GM12878 (cell line): ENCODE measurements at regions of chr9 and their contacts with region 1.

Region 1: DNA sequence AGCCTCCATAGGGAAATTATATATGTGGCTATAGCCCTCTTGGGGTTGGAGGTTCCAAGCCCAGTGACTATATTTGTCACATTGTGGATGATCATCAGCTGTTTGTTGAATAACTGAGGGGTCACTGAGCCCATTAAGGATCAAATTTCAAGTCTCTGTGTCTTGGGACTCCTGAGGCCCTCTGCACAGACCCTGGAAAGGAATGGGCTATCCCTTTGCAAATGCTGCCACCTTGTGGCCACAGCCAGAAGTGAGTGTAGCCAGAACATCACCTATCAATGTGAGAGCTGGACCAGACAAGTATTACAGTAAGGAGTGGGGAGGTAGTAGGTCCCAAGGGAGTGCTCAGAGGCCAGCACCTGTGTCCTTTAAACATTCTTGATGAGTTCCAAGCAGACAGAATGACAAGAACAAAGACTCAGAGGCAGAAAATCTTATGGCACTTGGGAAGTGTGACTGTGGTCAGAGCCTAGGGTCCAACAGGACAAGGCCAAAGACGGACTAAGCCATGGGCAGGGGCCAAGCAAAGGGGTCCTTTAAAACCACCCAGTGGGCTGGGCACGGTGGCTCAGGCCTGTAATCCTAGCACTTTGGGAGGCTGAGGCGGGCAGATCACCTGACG is 8.2 kb downstream of the RPP25L start:
- DNase-seq: peak; percentile 27
- ATAC-seq: peak; percentile 98
- H3K4me3 ChIP-seq: no peak overlapping the region
- H3K27ac ChIP-seq: no peak overlapping the region
- H3K4me1 ChIP-seq: no peaks in the 10 kb centered on the region
- H3K27me3 ChIP-seq: peaks cover 4% of the 10 kb centered on the region in 2 experiments; a peak in 2 of 4 replicates
- CTCF ChIP-seq: peak; percentile 90 to 95 (median 93)
- EP300 ChIP-seq: no peak
- POLR2A ChIP-seq: no peak
- RAD21 ChIP-seq: peak; percentile 82

Region 2: DNA sequence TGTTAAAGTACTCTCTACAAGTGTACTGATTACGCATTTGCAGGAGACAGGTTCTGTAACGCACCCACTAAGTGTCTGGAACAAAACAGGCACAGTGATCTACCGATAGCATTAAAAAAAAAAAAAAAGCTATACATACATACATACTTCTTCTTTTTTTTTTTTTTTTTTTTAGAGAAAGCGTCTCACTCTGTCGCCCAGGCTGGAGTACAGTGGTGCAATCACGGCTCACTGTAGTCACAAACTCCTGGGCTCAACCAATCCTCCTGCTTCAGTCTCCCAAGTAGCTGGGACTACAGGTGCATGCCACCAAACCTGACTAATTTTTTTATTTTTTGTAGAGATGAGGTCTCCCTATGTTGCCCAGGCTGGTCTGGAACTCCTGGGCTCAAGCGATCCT is 282.3 kb before region 1 on chr9:
- CTCF ChIA-PET with region 1: no interaction called
- POLR2A ChIA-PET with region 1: no interaction called
- RAD21 ChIA-PET with region 1: no interaction called
- SMC1A ChIA-PET with region 1: no interaction called
- in situ Hi-C with region 1: no loop called
- intact Hi-C with region 1: no loop called
- DNase-seq: no peak
- ATAC-seq: peak; percentile 36; the same call in 2 of the 3 replicates
- H3K4me3 ChIP-seq: no peak overlapping the region
- H3K27ac ChIP-seq: no peak overlapping the region
- H3K4me1 ChIP-seq: no peaks in the 10 kb centered on the region; the same call in 1 of the 2 replicates
- H3K27me3 ChIP-seq: no peaks in the 10 kb centered on the region
- CTCF ChIP-seq: no peak
- EP300 ChIP-seq: no peak
- POLR2A ChIP-seq: no peak
- RAD21 ChIP-seq: no peak

Region 3: DNA sequence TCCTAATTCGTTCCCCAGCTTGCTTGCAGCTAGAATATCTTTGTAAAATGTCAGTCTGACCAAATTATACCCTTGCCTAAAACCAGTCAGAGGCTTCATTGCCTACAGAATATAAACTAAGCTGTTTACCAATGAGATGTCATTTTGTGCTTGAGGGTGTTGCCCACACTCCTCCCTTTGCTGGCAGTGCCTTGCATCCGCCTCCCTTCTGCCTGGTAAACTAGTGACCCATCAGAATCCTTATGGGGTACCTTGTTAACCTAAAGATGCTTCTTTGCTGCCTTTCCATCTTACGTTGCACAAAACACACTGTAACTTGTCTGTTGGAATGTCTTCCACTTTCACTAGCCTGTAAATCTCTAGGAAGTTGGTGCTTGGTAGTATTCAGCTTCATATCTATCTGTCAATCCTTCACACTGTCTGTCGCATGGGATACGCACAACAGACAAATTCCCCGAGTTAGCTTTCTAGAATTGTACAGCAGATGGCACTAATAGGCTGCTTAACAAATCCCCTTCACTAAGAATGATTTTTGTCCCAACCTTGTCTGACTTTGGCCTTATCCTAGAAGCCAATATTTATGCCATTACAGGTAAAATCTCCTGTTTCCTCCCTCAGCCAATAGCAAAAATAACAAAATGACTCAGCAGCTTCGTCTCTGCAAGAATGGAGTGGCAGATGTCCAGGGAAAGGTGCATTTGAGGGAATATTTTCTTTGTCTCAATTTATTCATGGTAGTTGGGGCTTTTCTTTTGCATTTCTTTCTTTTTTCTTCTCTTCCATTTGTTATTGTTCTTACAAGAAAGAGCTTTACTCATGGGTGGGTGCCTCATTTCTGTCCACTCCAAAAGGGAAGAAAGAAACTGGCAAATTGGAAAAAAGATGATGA is 271.4 kb before region 1 on chr9:
- CTCF ChIA-PET with region 1: interaction called, 4 read pairs
- POLR2A ChIA-PET with region 1: no interaction called
- RAD21 ChIA-PET with region 1: no interaction called
- SMC1A ChIA-PET with region 1: no interaction called
- in situ Hi-C with region 1: no loop called
- intact Hi-C with region 1: loop called (anchors 5 kb)
- DNase-seq: peak; percentile 12
- ATAC-seq: no peak
- H3K4me3 ChIP-seq: no peak overlapping the region
- H3K27ac ChIP-seq: no peak overlapping the region
- H3K4me1 ChIP-seq: no peaks in the 10 kb centered on the region; the same call in 1 of the 2 replicates
- H3K27me3 ChIP-seq: no peaks in the 10 kb centered on the region
- CTCF ChIP-seq: peak; percentile 40 to 61 (median 42); a peak in 4 of 6 replicates
- EP300 ChIP-seq: no peak
- POLR2A ChIP-seq: no peak
- RAD21 ChIP-seq: peak; percentile 55

Region 4: GRCh38 chr9:34403554-34404380 is 200.0 kb before region 1 on chr9:
- CTCF ChIA-PET with region 1: interaction called, 24 read pairs
- POLR2A ChIA-PET with region 1: no interaction called
- RAD21 ChIA-PET with region 1: interaction called, 7 read pairs
- SMC1A ChIA-PET with region 1: interaction called, 3 read pairs
- in situ Hi-C with region 1: no loop called
- intact Hi-C with region 1: no loop called
- DNase-seq: no peak
- ATAC-seq: peak; percentile 62; the same call in 2 of the 3 replicates
- H3K4me3 ChIP-seq: no peak overlapping the region
- H3K27ac ChIP-seq: no peak overlapping the region
- H3K4me1 ChIP-seq: no peaks in the 10 kb centered on the region
- H3K27me3 ChIP-seq: peaks cover 2 to 3% of the 10 kb centered on the region in 2 experiments; a peak in 3 of 4 replicates
- CTCF ChIP-seq: peak; percentile 90 to 99 (median 96)
- EP300 ChIP-seq: no peak
- POLR2A ChIP-seq: no peak
- RAD21 ChIP-seq: peak; percentile 79

Region 5: DNA sequence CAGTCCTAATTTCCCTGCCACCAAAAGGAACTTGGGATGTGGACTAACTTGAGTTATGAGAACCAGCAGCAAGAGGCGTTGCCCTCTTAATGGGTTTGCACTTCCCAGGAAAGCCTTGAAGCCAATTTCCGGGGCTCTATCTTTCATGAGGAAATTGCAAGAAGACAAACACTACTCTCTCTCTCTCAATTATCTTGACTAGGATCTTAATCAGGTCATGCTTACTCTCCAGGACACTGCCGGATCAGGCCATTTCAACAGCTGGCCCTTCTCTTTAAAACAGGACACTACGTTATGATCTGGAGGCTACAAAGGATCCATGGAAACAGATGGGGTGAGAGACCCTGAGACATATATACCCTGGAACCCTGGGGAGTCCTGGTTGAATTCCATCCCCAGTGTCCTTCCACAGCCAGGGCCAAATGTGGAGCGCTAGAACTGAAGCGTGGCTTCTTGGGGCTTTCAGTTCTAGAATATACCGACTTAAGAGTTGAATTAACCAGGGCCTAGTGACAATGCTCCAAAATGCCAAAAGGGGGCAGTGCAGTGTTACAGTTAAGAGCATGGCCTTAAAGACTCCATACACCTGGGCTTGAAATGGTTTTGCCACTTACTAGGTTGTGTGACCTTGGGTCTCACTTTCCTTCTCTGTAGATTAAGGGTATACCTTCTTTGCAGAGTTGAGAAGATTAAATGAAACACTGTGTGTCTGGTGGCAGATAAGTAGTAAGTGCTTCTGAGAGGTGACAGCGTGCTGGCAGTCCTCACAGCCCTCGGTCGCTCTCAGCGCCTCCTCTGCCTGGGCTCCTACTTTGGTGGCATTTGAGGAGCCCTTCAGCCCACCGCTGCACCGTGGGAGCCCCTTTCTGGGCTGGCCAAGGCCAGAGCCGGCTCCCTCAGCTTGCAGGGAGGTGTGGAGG is 166.5 kb before region 1 on chr9:
- CTCF ChIA-PET with region 1: interaction called, 16 read pairs
- POLR2A ChIA-PET with region 1: no interaction called
- RAD21 ChIA-PET with region 1: interaction called, 3 read pairs
- SMC1A ChIA-PET with region 1: interaction called, 3 read pairs
- in situ Hi-C with region 1: no loop called
- intact Hi-C with region 1: no loop called
- DNase-seq: peak; percentile 40
- ATAC-seq: peak; percentile 98
- H3K4me3 ChIP-seq: no peak overlapping the region
- H3K27ac ChIP-seq: no peak overlapping the region
- H3K4me1 ChIP-seq: no peaks in the 10 kb centered on the region
- H3K27me3 ChIP-seq: no peaks in the 10 kb centered on the region
- CTCF ChIP-seq: peak; percentile 71 to 90 (median 88)
- EP300 ChIP-seq: no peak
- POLR2A ChIP-seq: no peak
- RAD21 ChIP-seq: peak; percentile 90

Region 6: GRCh38 chr9:34591248-34591916 is 12.3 kb before region 1 on chr9:
- CTCF ChIA-PET with region 1: interaction called, 12 read pairs
- POLR2A ChIA-PET with region 1: no interaction called
- RAD21 ChIA-PET with region 1: no interaction called
- SMC1A ChIA-PET with region 1: interaction called, 4 read pairs
- in situ Hi-C with region 1: no loop called
- intact Hi-C with region 1: no loop called
- DNase-seq: no peak
- ATAC-seq: peak; percentile 97
- H3K4me3 ChIP-seq: no peak overlapping the region
- H3K27ac ChIP-seq: no peak overlapping the region
- H3K4me1 ChIP-seq: peaks cover 2% of the 10 kb centered on the region; the same call in 1 of the 2 replicates
- H3K27me3 ChIP-seq: peaks cover 28 to 50% of the 10 kb centered on the region in 2 experiments
- CTCF ChIP-seq: peak; percentile 75 to 94 (median 87)
- EP300 ChIP-seq: no peak
- POLR2A ChIP-seq: no peak
- RAD21 ChIP-seq: peak; percentile 66

Region 7: GRCh38 chr9:34620061-34620994 is 16.6 kb after region 1 on chr9 and contains the start of gene DCTN3:
- CTCF ChIA-PET with region 1: interaction called, 21 read pairs
- POLR2A ChIA-PET with region 1: interaction called, 4 read pairs
- RAD21 ChIA-PET with region 1: interaction called, 3 read pairs
- SMC1A ChIA-PET with region 1: interaction called, 5 read pairs
- in situ Hi-C with region 1: no loop called
- intact Hi-C with region 1: no loop called
- DNase-seq: peak; percentile 77
- ATAC-seq: peak; percentile 100
- H3K4me3 ChIP-seq: peak within 1 kb of the TSS; percentile 96
- H3K27ac ChIP-seq: peak within 1 kb of the TSS; percentile 14; the same call in 1 of the 2 replicates
- H3K4me1 ChIP-seq: peaks cover 6% of the 10 kb centered on the region
- H3K27me3 ChIP-seq: peaks cover 6 to 7% of the 10 kb centered on the region in 2 experiments; a peak in 2 of 4 replicates
- CTCF ChIP-seq: no peak
- EP300 ChIP-seq: no peak
- POLR2A ChIP-seq: peak; percentile 93
- RAD21 ChIP-seq: no peak
- polyA plus RNA-seq, gene DCTN3: 19.0 to 52.0 TPM

Region 8: GRCh38 chr9:34637356-34638137 is 33.8 kb after region 1 on chr9 and contains the start of gene SIGMAR1:
- CTCF ChIA-PET with region 1: interaction called, 39 read pairs
- POLR2A ChIA-PET with region 1: no interaction called
- RAD21 ChIA-PET with region 1: interaction called, 6 read pairs
- SMC1A ChIA-PET with region 1: interaction called, 6 read pairs
- in situ Hi-C with region 1: no loop called
- intact Hi-C with region 1: no loop called
- DNase-seq: peak; percentile 61
- ATAC-seq: peak; percentile 94
- H3K4me3 ChIP-seq: peak within 1 kb of the TSS; percentile 72
- H3K27ac ChIP-seq: peak within 1 kb of the TSS; percentile 52
- H3K4me1 ChIP-seq: no peaks in the 10 kb centered on the region; the same call in none of the 2 replicates
- H3K27me3 ChIP-seq: no peaks in the 10 kb centered on the region
- CTCF ChIP-seq: no peak
- EP300 ChIP-seq: no peak
- POLR2A ChIP-seq: peak; percentile 96
- RAD21 ChIP-seq: no peak
- polyA plus RNA-seq, gene SIGMAR1: 7.1 to 19.6 TPM